ENCODE measurements at regions of chrX and their contacts with region 1.

Region 1: GRCh38 chrX:133335027-133335426 is 80.3 kb downstream of the GPC4 start:
- DNase-seq: no peak
- ATAC-seq: no peak
- H3K4me3 ChIP-seq: no peak overlapping the region
- H3K27ac ChIP-seq: no peak overlapping the region
- H3K4me1 ChIP-seq: no peaks in the 10 kb centered on the region
- H3K27me3 ChIP-seq: no peaks in the 10 kb centered on the region

Region 2: DNA sequence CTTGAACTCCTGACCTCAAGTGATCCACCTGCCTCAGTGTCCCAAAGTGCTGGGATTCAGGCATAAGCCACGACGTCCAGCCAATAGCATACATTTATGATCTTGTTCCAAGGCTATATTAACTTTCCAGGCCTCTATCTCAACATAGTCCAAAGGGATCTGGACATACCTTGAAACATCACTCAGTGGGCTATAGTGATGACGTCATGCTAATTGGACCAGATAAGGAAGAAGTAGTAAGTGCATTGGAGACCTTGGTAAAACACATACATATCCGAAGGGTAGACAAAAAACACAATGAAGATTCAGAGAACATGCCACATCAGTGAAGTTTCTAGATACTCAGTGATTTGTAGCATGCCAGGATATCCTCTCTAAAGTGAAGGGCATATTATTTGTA is 200.7 kb before region 1 on chrX:
- intact Hi-C with region 1: no loop called
- DNase-seq: no peak
- ATAC-seq: no peak
- H3K4me3 ChIP-seq: no peak overlapping the region
- H3K27ac ChIP-seq: no peak overlapping the region
- H3K4me1 ChIP-seq: no peaks in the 10 kb centered on the region
- H3K27me3 ChIP-seq: no peaks in the 10 kb centered on the region

Region 3: GRCh38 chrX:133534172-133534571 is 199.1 kb after region 1 on chrX:
- intact Hi-C with region 1: no loop called
- DNase-seq: no peak
- ATAC-seq: no peak
- H3K4me3 ChIP-seq: no peak overlapping the region
- H3K27ac ChIP-seq: no peak overlapping the region
- H3K4me1 ChIP-seq: no peaks in the 10 kb centered on the region
- H3K27me3 ChIP-seq: no peaks in the 10 kb centered on the region

Region 4: GRCh38 chrX:133563705-133564104 is 228.7 kb after region 1 on chrX:
- intact Hi-C with region 1: no loop called
- DNase-seq: no peak
- ATAC-seq: peak; percentile 37 to 62
- H3K4me3 ChIP-seq: no peak overlapping the region
- H3K27ac ChIP-seq: no peak overlapping the region
- H3K4me1 ChIP-seq: no peaks in the 10 kb centered on the region
- H3K27me3 ChIP-seq: no peaks in the 10 kb centered on the region

Region 5: DNA sequence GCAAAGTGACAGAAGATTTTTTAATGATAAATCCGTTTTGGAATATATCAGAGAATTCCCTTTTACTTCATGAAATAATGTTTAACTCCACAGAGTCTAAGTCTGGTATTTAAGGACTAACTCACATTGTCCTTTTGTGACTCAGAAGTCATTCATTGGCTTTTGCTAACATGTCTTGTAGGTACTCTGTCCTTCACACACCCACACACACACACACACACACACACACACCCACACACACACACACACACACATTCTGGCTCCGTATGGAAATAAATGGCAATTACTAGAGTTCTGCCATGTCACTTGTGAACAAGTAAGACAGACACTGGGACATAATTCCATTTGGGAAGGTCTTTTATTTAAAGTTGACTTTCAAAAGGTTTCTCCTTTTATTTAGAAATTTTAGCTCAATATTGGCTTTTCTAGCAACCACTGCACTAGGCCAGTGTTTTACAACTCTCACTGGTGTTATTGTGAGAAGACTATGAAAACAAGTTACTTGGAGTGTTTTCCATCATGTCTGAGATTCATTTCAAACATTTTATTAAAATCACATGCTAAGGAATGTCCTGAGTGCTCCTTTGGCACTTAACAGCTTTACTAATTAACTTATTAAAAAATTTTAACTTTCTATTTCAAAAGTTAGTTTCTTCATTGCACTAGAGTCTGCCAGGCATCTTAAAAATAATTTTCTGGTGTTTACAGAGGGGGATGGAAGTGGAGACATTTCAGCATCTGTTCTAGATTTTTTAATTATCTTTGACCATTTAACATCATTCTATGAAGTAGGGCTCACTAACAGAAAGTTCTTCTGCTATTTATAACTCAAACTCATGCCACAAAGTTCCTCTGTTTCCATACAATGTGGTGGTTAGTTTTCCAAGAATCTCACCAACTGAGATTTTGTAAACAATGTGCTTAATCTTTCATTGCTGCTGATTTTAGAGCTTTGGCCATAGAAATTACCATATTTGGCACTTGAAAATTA is 320.5 kb after region 1 on chrX:
- intact Hi-C with region 1: loop called in 1 of 4 experiments (anchors 10 kb)
- DNase-seq: no peak
- ATAC-seq: no peak
- H3K4me3 ChIP-seq: no peak overlapping the region
- H3K27ac ChIP-seq: no peak overlapping the region
- H3K4me1 ChIP-seq: no peaks in the 10 kb centered on the region
- H3K27me3 ChIP-seq: no peaks in the 10 kb centered on the region

Region 6: DNA sequence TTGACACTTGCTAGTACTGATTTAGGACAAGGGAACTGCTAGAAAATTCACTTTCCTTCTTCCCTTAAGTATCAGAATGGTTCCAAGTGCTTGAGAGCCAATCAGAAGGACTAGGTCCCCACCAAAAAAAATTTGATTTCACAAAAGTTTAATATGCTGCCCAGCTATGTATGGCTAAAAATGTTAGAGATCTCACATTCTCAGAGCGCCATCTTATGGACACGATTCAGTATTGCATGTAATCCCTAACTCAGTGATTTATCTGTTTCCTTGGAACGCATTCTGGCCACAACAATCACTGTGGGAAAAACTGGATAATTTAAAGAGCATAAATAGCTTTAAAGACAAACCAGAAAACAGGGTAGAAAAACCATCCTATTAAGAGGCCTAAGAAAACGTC is 335.4 kb after region 1 on chrX:
- intact Hi-C with region 1: loop called in 2 of 4 experiments (anchors 5 kb)
- DNase-seq: no peak
- ATAC-seq: peak in 1 of 2 donors; percentile 25
- H3K4me3 ChIP-seq: no peak overlapping the region
- H3K27ac ChIP-seq: no peak overlapping the region
- H3K4me1 ChIP-seq: no peaks in the 10 kb centered on the region
- H3K27me3 ChIP-seq: no peaks in the 10 kb centered on the region